ENCODE measurements at regions of chr4 and their contacts with region 1.

Region 1: GRCh38 chr4:149031399-149031798 is 589.2 kb upstream of the NR3C2 start:
- DNase-seq: peak; percentile 7
- H3K4me3 Mint-ChIP-seq: no peak overlapping the region
- H3K27ac Mint-ChIP-seq: no peak overlapping the region
- H3K4me1 Mint-ChIP-seq: no peaks in the 10 kb centered on the region
- H3K27me3 Mint-ChIP-seq: no peaks in the 10 kb centered on the region

Region 2: DNA sequence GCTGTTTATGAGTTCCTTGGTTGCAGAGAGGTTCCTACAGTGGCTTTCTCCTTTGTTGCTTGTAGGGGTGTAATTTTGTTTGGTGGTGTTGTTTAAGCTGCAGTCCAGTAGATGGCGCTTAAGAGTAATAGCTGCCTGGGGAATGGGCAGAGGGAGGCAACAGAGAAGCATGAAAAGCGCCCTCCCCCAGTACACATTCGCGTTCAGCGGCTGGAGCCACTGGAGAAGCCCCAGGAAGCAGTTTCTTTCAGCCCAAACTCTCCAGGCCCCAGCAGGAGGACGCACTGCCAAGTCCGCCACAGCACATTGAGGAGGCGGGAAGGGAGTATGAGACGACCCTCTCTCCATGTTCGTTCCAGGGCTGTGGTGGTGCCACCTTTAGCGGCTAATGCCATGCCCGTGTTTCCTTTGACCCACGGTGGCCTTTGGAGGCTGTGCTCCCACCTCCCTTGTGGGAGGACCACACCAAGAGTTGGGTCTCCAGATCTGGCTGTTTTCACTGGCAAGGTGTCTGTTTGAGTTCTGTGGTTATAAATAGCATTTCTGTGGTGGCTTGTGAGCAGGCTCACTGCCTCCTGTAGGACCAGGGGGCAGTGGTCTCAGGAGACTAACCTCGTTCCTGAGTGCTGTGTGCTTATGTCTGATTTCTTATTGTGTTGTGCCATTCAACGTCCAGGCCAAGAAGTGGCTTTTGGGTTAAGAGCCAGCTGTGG is 1047.2 kb before region 1 on chr4:
- CTCF ChIA-PET with region 1: no interaction called
- intact Hi-C with region 1: loop called (anchors 10 kb)
- DNase-seq: peak; percentile 19
- H3K4me3 Mint-ChIP-seq: no peak overlapping the region
- H3K27ac Mint-ChIP-seq: no peak overlapping the region
- H3K4me1 Mint-ChIP-seq: peaks cover 9% of the 10 kb centered on the region
- H3K27me3 Mint-ChIP-seq: no peaks in the 10 kb centered on the region

Region 3: GRCh38 chr4:148021686-148022085 is 1009.7 kb before region 1 on chr4:
- CTCF ChIA-PET with region 1: no interaction called
- intact Hi-C with region 1: loop called (anchors 5 kb)
- DNase-seq: no peak
- H3K4me3 Mint-ChIP-seq: no peak overlapping the region
- H3K27ac Mint-ChIP-seq: no peak overlapping the region
- H3K4me1 Mint-ChIP-seq: no peaks in the 10 kb centered on the region
- H3K27me3 Mint-ChIP-seq: no peaks in the 10 kb centered on the region

Region 4: DNA sequence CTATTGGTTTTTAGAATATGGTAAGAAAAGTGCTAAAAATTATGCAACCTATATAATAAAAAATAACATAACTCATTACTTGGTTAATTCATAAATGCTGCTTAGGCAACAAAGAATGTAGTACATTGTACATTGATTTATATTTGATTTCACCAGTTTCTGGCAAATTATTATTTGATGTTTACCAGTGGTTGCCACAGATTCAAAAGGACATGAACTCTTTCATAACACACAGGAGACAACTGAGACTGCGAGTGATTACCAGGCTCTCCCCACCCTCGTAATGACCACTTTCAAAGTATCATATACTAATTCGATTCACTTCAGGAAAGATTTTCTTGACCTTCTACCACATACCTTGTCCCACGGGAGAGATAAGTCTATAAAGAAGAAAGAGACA is 747.7 kb before region 1 on chr4:
- CTCF ChIA-PET with region 1: no interaction called
- intact Hi-C with region 1: loop called (anchors 1 kb)
- DNase-seq: no peak
- H3K4me3 Mint-ChIP-seq: no peak overlapping the region
- H3K27ac Mint-ChIP-seq: no peak overlapping the region
- H3K4me1 Mint-ChIP-seq: peaks cover 23% of the 10 kb centered on the region
- H3K27me3 Mint-ChIP-seq: no peaks in the 10 kb centered on the region